ENCODE measurements at regions of chr5 and their contacts with region 1.

Region 1: DNA sequence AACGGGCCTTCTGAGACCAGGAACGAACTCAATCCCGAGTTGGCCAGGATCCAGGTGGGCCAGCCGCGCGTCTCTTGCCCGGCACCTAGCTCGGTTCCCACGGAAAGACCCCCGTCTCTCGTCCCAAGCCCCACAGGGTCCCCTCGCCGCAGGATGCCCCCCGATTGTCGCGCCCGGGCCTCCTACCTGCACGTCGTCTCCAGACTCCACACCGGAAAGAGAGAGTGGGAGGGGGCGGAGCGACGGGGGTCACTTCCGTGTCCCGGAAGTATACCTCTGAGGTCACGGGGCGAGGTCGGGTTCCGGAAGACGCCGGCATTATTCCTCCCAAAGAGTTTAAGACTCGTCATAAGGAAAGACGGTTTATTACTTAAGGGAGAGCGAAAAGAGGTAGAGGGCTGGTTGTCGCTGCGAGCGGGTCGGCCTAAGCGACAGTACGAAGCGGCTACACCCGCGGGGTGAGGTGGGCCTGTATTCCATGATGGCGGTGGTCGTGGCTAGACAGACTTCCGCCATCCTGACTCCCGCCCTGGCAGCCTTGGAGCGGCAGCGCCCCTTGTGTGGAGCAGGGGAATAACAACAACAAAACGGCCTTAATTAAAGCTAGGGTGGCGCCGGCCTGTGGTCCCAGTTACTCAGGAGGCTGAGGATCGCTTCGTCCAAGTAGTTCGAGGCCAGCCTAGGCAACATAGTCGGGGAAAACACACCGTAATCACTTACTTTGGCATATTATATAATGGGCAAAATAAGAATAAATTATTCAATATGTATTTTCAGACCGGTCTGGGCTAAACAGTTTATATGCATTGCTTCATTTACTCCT is at the start of gene RPS14:
- DNase-seq: peak; percentile 96
- H3K4me3 Mint-ChIP-seq: peak within 1 kb of the TSS; percentile 91
- H3K27ac Mint-ChIP-seq: peak within 1 kb of the TSS; percentile 99
- H3K4me1 Mint-ChIP-seq: peaks cover 36% of the 10 kb centered on the region
- H3K27me3 Mint-ChIP-seq: no peaks in the 10 kb centered on the region
- total RNA-seq, gene RPS14: 2,151 to 2,478 TPM

Region 2: DNA sequence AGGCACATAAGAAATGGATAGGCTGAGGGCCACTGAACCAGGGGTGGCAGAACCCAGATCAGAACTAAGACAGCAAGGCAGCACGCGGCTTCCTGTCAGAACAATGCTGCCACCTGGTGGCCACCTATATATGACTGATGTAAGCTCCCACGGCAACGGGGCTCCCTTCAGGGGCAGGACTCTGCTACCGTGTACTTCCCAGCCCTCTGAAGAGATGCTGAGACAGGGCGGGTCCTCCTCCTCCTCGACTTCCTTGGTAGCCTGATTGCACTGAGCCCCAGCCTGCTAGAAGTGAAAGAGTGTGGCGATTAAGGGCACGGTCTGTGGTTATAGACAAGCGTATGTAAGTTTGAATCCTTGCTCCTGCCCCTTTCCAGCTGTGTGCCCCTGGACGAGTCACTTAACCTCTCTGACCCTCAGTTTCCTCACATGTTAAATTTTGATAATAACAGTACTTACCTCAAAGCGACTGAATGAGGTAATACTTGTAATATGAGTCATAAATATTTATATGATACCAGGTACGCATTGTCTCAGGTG is 13.5 kb before region 1 on chr5:
- CTCF ChIA-PET with region 1: interaction called, 15 read pairs
- POLR2A ChIA-PET with region 1: no interaction called
- DNase-seq: peak; percentile 93
- H3K4me3 Mint-ChIP-seq: no peak overlapping the region
- H3K27ac Mint-ChIP-seq: peak overlapping the region; percentile 37
- H3K4me1 Mint-ChIP-seq: peaks cover 12% of the 10 kb centered on the region
- H3K27me3 Mint-ChIP-seq: peaks cover 2% of the 10 kb centered on the region

Region 3: GRCh38 chr5:150469718-150470469 is 20.2 kb after region 1 on chr5:
- CTCF ChIA-PET with region 1: no interaction called
- POLR2A ChIA-PET with region 1: no interaction called
- DNase-seq: no peak
- H3K4me3 Mint-ChIP-seq: no peak overlapping the region
- H3K27ac Mint-ChIP-seq: no peak overlapping the region
- H3K4me1 Mint-ChIP-seq: no peaks in the 10 kb centered on the region
- H3K27me3 Mint-ChIP-seq: no peaks in the 10 kb centered on the region

Region 4: GRCh38 chr5:150503977-150504620 is 54.4 kb after region 1 on chr5:
- CTCF ChIA-PET with region 1: no interaction called
- POLR2A ChIA-PET with region 1: no interaction called
- DNase-seq: no peak
- H3K4me3 Mint-ChIP-seq: no peak overlapping the region
- H3K27ac Mint-ChIP-seq: no peak overlapping the region
- H3K4me1 Mint-ChIP-seq: no peaks in the 10 kb centered on the region
- H3K27me3 Mint-ChIP-seq: no peaks in the 10 kb centered on the region

Measured in activated CD4-positive, alpha-beta T cell treated with anti-CD3 and anti-CD28 coated beads, Interleukin-2, amount 10 ng/mL, durations not matched to agents 7 days and 5 days (primary cell).